GM12878 (cell line): ENCODE measurements at regions of chr2 and their contacts with region 1.

Region 1: DNA sequence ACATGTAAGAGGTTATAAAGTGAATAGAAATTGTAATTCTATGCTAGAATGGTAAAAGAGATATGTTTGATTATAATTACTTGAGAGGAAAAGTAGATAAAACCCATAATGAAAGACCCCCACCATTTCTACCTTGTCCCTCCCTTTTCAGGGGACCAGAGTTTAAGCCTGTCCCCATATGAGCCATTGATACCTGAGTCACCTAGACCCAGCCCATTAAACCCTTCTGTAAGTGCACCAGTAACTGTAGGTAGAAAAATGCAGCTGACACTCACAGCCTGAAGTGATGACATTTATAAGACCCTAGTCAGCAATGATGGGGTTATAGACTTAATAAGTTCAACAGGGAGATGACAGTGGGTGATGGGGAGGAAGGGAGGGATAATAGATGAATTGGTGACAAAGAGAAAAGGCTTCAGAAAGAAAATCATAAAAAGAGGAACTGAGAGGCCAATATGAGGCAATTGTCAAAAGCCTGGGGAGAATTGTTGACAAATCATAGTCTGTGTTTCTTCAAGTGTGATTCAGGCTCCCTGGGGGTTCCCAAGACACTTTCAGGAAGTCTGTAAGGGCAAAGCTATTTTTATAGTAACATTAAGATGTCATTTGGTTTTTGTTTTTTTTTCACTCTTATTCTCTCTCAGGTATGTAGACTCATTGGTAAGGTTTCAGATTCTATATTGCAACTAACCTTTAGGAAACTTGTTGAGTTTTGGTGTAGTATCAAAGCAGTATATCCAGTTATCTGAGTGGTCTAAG is 544.2 kb downstream of the SATB2 start:
- DNase-seq: peak; percentile 89
- ATAC-seq: peak; percentile 96
- H3K4me3 ChIP-seq: no peak overlapping the region
- H3K27ac ChIP-seq: peak overlapping the region; percentile 58
- H3K4me1 ChIP-seq: peaks cover 9% of the 10 kb centered on the region
- H3K27me3 ChIP-seq: no peaks in the 10 kb centered on the region
- CTCF ChIP-seq: no peak
- EP300 ChIP-seq: peak; percentile 97 to 98
- POLR2A ChIP-seq: no peak
- RAD21 ChIP-seq: no peak

Region 2: GRCh38 chr2:198374375-198375082 is 539.0 kb before region 1 on chr2:
- CTCF ChIA-PET with region 1: no interaction called
- POLR2A ChIA-PET with region 1: no interaction called
- RAD21 ChIA-PET with region 1: no interaction called
- SMC1A ChIA-PET with region 1: no interaction called
- in situ Hi-C with region 1: no loop called
- intact Hi-C with region 1: loop called (anchors 1 kb)
- DNase-seq: no peak
- ATAC-seq: no peak
- H3K4me3 ChIP-seq: no peak overlapping the region
- H3K27ac ChIP-seq: no peak overlapping the region
- H3K4me1 ChIP-seq: peaks cover 9% of the 10 kb centered on the region
- H3K27me3 ChIP-seq: peaks cover under 1 to 6% of the 10 kb centered on the region in 2 experiments; a peak in 2 of 4 replicates
- CTCF ChIP-seq: peak; percentile 52 to 70 (median 55); a peak in 5 of 6 replicates
- EP300 ChIP-seq: no peak
- POLR2A ChIP-seq: no peak
- RAD21 ChIP-seq: peak; percentile 73

Region 3: GRCh38 chr2:198700319-198700718 is 213.3 kb before region 1 on chr2:
- CTCF ChIA-PET with region 1: no interaction called
- POLR2A ChIA-PET with region 1: interaction called, 3 read pairs
- RAD21 ChIA-PET with region 1: interaction called, 9 read pairs
- SMC1A ChIA-PET with region 1: interaction called, 22 read pairs
- in situ Hi-C with region 1: no loop called
- intact Hi-C with region 1: no loop called
- DNase-seq: no peak
- ATAC-seq: peak; percentile 48
- H3K4me3 ChIP-seq: no peak overlapping the region
- H3K27ac ChIP-seq: no peak overlapping the region
- H3K4me1 ChIP-seq: no peaks in the 10 kb centered on the region
- H3K27me3 ChIP-seq: no peaks in the 10 kb centered on the region
- CTCF ChIP-seq: no peak
- EP300 ChIP-seq: 0 out of 4 replicates have a peak, but pooled peaks of 1 of the 2 experiments have one; percentile 25
- POLR2A ChIP-seq: no peak
- RAD21 ChIP-seq: no peak

Region 4: GRCh38 chr2:198890490-198890889 is 23.1 kb before region 1 on chr2:
- CTCF ChIA-PET with region 1: interaction called, 4 read pairs
- POLR2A ChIA-PET with region 1: interaction called, 3 read pairs
- RAD21 ChIA-PET with region 1: interaction called, 7 read pairs
- SMC1A ChIA-PET with region 1: interaction called, 8 read pairs
- in situ Hi-C with region 1: no loop called
- intact Hi-C with region 1: loop called (anchors 2 kb)
- DNase-seq: no peak
- ATAC-seq: peak; percentile 95
- H3K4me3 ChIP-seq: no peak overlapping the region
- H3K27ac ChIP-seq: no peak overlapping the region
- H3K4me1 ChIP-seq: no peaks in the 10 kb centered on the region
- H3K27me3 ChIP-seq: no peaks in the 10 kb centered on the region
- CTCF ChIP-seq: no peak
- EP300 ChIP-seq: peak; percentile 70 to 72; a peak in 2 of 4 replicates
- POLR2A ChIP-seq: no peak
- RAD21 ChIP-seq: no peak

Region 5: GRCh38 chr2:199223791-199224190 is 310.2 kb after region 1 on chr2:
- CTCF ChIA-PET with region 1: no interaction called
- POLR2A ChIA-PET with region 1: no interaction called
- RAD21 ChIA-PET with region 1: no interaction called
- SMC1A ChIA-PET with region 1: no interaction called
- in situ Hi-C with region 1: no loop called
- intact Hi-C with region 1: no loop called
- DNase-seq: no peak
- ATAC-seq: no peak
- H3K4me3 ChIP-seq: no peak overlapping the region
- H3K27ac ChIP-seq: no peak overlapping the region
- H3K4me1 ChIP-seq: no peaks in the 10 kb centered on the region
- H3K27me3 ChIP-seq: no peaks in the 10 kb centered on the region
- CTCF ChIP-seq: no peak
- EP300 ChIP-seq: no peak
- POLR2A ChIP-seq: no peak
- RAD21 ChIP-seq: no peak

Region 6: DNA sequence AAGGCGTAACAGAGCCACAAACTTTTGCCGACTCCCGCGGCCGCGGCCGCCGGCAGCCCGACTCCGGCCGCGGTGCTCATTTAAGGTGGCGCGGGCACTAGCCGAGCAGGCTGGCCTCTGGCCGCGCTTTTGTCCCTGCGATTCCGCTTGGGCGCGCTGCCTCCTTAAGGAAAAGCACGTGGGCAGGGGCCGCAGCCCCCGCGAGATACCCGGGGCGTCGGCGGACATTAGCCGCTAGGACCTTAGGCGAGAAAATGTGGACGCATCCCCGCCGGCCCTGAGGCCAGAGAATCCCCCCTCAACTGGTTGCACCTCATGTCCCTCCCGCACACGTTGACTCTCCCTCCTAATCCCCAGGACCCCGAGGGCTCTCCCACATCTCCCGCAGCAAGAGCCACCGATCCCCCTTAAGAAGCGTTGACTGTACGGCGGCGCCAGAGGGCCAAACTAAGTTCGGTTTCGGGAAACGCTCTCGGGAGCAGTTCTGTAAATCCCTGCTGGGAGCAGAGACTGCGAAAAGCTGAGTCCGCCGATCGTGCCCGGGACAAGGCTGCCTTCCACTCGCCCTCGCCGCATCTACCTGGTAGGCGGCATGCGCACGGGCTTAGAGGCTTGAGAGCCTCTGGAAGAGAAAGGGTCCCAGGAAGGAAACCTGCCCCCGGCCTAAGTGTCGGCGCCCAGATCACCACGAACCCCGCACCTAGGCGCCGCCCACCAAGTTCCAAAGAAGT is 545.9 kb after region 1 on chr2:
- CTCF ChIA-PET with region 1: no interaction called
- POLR2A ChIA-PET with region 1: no interaction called
- RAD21 ChIA-PET with region 1: no interaction called
- SMC1A ChIA-PET with region 1: no interaction called
- in situ Hi-C with region 1: no loop called
- intact Hi-C with region 1: loop called (anchors 5 kb)
- DNase-seq: peak; percentile 16
- ATAC-seq: peak; percentile 62
- H3K4me3 ChIP-seq: peak overlapping the region; percentile 78
- H3K27ac ChIP-seq: no peak overlapping the region
- H3K4me1 ChIP-seq: no peaks in the 10 kb centered on the region
- H3K27me3 ChIP-seq: peaks cover 15 to 31% of the 10 kb centered on the region in 2 experiments
- CTCF ChIP-seq: no peak
- EP300 ChIP-seq: no peak
- POLR2A ChIP-seq: no peak
- RAD21 ChIP-seq: no peak